Breast epithelium (tissue), 4 donors: ENCODE measurements at regions of chr10 and their contacts with region 1.

Region 1: DNA sequence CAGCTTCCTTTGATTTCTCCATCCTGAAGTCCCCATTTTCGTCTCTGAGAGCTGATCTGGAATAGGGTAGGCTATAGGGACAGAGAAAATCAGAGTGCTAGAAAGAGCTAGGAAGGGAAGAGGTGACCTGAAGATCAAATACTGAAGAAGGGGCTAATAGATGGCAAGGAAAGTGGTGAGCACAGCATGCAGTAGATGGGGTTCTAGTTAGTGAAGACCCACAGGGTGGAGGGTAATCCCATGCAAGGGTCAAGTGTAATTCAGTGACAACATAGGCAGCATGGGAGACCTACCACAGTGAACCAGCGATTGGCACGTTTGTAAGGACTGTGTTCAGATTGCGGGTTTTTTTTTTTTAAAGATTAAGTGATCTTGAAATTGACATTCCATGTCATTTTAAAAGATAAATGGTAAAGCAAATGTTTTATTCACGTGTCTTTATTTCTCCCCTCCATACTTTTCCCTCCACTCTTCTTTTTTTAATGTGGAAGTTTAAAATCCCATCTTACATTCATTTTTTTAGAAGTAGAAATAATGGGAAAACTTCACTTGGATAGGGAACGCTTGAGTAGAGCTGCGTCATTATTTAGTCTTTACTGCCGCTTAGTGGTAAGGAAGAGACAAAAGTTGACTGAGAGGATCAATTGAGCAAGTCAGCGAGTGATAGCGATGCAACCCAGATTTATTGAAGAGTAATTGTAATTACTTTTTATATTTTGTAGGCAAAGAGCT is 21.0 kb upstream of the ABI1 start:
- DNase-seq: no peak
- H3K4me3 ChIP-seq: no peak overlapping the region
- H3K27ac ChIP-seq: no peak overlapping the region
- H3K4me1 ChIP-seq: no peaks in the 10 kb centered on the region
- H3K27me3 ChIP-seq: peaks cover 0 to 6% of the 10 kb centered on the region in 2 donors
- CTCF ChIP-seq: peak; percentile 50 to 83 (median 75)
- POLR2A ChIP-seq: no peak

Region 2: DNA sequence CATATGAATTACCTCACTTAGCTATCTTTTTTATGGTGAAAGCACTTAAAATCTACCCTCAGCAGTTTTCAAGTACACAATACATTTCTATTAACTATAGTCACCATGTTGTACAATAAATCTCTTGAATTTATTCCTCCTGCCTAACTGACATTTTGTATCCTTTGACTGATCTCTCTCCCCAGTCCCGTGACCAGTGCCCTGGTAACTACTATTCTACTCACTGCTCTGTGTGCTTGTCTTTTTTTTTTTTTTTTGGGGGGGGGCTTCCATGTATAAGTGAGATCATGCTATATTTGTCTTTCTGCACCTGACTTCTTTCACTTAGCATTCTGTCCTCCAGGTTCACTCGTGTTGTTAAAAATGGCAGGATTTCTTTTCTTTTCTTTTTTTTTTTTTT is 676.5 kb before region 1 on chr10:
- intact Hi-C with region 1: no loop called
- DNase-seq: no peak
- H3K4me3 ChIP-seq: no peak overlapping the region
- H3K27ac ChIP-seq: no peak overlapping the region
- H3K4me1 ChIP-seq: no peaks in the 10 kb centered on the region
- H3K27me3 ChIP-seq: no peaks in the 10 kb centered on the region
- CTCF ChIP-seq: no peak
- POLR2A ChIP-seq: no peak

Region 3: GRCh38 chr10:26725837-26726727 is 155.7 kb before region 1 on chr10:
- intact Hi-C with region 1: loop called (anchors 10 kb)
- DNase-seq: peak in 1 of 2 donors; percentile 71
- H3K4me3 ChIP-seq: no peak overlapping the region
- H3K27ac ChIP-seq: no peak overlapping the region
- H3K4me1 ChIP-seq: no peaks in the 10 kb centered on the region
- H3K27me3 ChIP-seq: no peaks in the 10 kb centered on the region
- CTCF ChIP-seq: peak; percentile 74 to 80 (median 79)
- POLR2A ChIP-seq: no peak